ENCODE measurements at regions of chr7 and their contacts with region 1.

Region 1: DNA sequence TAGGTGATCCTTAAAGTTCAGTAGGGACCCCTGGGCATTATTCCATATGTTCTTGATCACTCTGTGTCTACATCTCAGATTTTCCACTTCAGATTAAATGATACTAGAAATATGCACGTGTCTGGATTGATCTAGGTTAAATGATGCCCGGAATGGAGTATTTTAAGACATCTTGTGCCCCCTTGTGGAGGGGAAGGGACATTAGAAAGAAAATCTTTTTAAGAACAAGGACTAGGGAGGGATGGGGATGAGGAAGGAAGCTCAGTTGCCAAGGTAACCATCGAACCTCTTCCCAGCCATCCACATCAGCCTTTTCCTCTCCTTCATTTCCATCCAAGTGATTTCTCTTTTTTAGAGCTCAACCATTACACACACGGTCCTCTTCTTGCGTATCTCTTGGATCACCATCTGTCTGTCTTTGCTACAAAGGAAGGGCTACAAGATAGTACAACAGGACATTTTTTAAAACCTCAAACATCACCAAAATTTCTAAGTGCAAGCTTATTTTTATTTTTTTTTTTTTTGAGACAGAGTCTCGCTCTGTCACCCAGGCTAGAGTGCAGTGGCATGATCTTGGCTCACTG is 40.5 kb downstream of the PRSS2 start:
- DNase-seq: peak in 10 of 35 experiments; percentile 30 to 85 (median 54)
- ATAC-seq: no peak
- H3K4me3 ChIP-seq: no peak overlapping the region
- H3K4me3 Mint-ChIP-seq: peak overlapping the region; percentile 54 to 93 (median 64)
- H3K27ac ChIP-seq: peak overlapping the region; percentile 97
- H3K27ac Mint-ChIP-seq: peak overlapping the region; percentile 100
- H3K4me1 ChIP-seq: peaks cover 72 to 76% of the 10 kb centered on the region in 2 experiments
- H3K4me1 Mint-ChIP-seq: peaks cover 81 to 94% (median 89%) of the 10 kb centered on the region in 3 donors
- H3K27me3 ChIP-seq: no peaks in the 10 kb centered on the region
- H3K27me3 Mint-ChIP-seq: no peaks in the 10 kb centered on the region

Region 2: DNA sequence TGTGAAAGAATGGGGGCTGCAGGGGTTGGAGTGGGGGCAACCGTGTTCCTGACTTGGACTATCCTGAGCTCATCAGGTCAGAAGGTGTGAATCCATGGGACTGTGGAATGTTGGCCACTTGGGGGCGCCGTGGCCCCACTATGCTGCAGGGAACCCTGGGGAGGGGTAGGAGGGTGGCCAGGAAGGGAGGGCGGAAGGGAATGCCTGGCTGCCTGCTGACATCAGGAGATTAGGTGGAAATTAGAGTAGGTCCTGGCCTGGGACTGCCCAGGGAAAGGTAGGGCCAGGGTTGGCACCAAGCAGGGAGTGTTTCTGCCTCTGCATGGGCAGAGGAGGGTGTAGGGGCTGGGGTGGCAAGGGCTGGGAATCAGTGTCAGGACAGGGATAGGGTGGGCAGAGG is 487.5 kb before region 1 on chr7:
- CTCF ChIA-PET with region 1: interaction called, 6 to 17 read pairs
- POLR2A ChIA-PET with region 1: interaction called in 1 of 2 experiments, 3 read pairs
- DNase-seq: peak in 22 of 35 experiments; percentile 13 to 65 (median 33)
- ATAC-seq: peak; percentile 40 to 55 (median 46)
- H3K4me3 ChIP-seq: no peak overlapping the region
- H3K4me3 Mint-ChIP-seq: peak overlapping the region in 1 of 3 donors; percentile 42
- H3K27ac ChIP-seq: no peak overlapping the region
- H3K27ac Mint-ChIP-seq: peak overlapping the region; percentile 77 to 80
- H3K4me1 ChIP-seq: peaks cover 3 to 22% of the 10 kb centered on the region in 2 experiments
- H3K4me1 Mint-ChIP-seq: peaks cover 22 to 43% (median 27%) of the 10 kb centered on the region in 3 donors
- H3K27me3 ChIP-seq: peaks cover 0 to 17% of the 10 kb centered on the region in 2 experiments
- H3K27me3 Mint-ChIP-seq: peaks cover 14% of the 10 kb centered on the region in 2 donors

Region 3: DNA sequence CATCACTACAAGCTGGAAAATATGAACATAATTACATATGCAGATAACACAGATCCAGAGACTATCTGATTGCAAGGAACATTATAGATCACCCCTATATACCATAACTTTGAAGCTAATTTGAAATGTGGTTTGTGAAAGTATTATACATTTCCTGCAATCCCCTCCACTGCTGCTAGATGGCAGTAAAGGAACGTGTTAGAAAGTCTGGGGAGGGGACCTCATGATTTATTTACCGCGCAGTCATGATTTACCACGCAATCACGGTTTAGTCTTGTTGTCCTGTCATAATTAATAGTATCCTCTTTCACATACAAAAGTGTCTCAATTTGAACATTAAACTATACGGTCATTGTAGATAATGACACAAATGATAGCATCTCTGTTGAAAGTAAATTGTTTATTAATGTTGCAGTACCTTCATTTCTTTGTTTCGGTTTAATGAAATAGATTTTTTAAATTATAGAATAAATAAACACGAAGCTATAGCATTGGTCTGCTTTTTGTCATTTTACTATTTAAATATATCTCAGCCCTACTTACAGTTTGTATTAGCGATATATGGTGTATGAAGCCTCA is 207.3 kb before region 1 on chr7:
- CTCF ChIA-PET with region 1: interaction called, 9 to 12 read pairs
- POLR2A ChIA-PET with region 1: interaction called in 1 of 2 experiments, 5 read pairs
- DNase-seq: peak in 29 of 35 experiments; percentile 8 to 75 (median 41)
- ATAC-seq: peak in 1 of 4 experiments; percentile 46
- H3K4me3 ChIP-seq: no peak overlapping the region
- H3K4me3 Mint-ChIP-seq: no peak overlapping the region
- H3K27ac ChIP-seq: no peak overlapping the region
- H3K27ac Mint-ChIP-seq: peak overlapping the region; percentile 41 to 61
- H3K4me1 ChIP-seq: no peaks in the 10 kb centered on the region
- H3K4me1 Mint-ChIP-seq: peaks cover 2 to 12% (median 9%) of the 10 kb centered on the region in 3 donors
- H3K27me3 ChIP-seq: no peaks in the 10 kb centered on the region
- H3K27me3 Mint-ChIP-seq: peaks cover 0 to 9% of the 10 kb centered on the region in 2 donors

Region 4: GRCh38 chr7:142669074-142669654 is 142.1 kb before region 1 on chr7:
- CTCF ChIA-PET with region 1: interaction called, 5 to 17 read pairs
- POLR2A ChIA-PET with region 1: no interaction called
- DNase-seq: peak in 2 of 35 experiments; percentile 6 to 51
- ATAC-seq: peak in 3 of 4 experiments; percentile 33 to 45 (median 35)
- H3K4me3 ChIP-seq: no peak overlapping the region
- H3K4me3 Mint-ChIP-seq: peak overlapping the region; percentile 31 to 49 (median 41)
- H3K27ac ChIP-seq: no peak overlapping the region
- H3K27ac Mint-ChIP-seq: peak overlapping the region; percentile 76 to 83
- H3K4me1 ChIP-seq: peaks cover 13 to 18% of the 10 kb centered on the region in 2 experiments
- H3K4me1 Mint-ChIP-seq: peaks cover 24 to 32% (median 25%) of the 10 kb centered on the region in 3 donors
- H3K27me3 ChIP-seq: no peaks in the 10 kb centered on the region
- H3K27me3 Mint-ChIP-seq: no peaks in the 10 kb centered on the region

Region 5: GRCh38 chr7:142754681-142755575 is 56.3 kb before region 1 on chr7:
- CTCF ChIA-PET with region 1: no interaction called
- POLR2A ChIA-PET with region 1: no interaction called
- DNase-seq: no peak
- ATAC-seq: no peak
- H3K4me3 ChIP-seq: no peak overlapping the region
- H3K4me3 Mint-ChIP-seq: no peak overlapping the region
- H3K27ac ChIP-seq: no peak overlapping the region
- H3K27ac Mint-ChIP-seq: no peak overlapping the region
- H3K4me1 ChIP-seq: no peaks in the 10 kb centered on the region
- H3K4me1 Mint-ChIP-seq: no peaks in the 10 kb centered on the region
- H3K27me3 ChIP-seq: no peaks in the 10 kb centered on the region
- H3K27me3 Mint-ChIP-seq: peaks cover 0 to 1% of the 10 kb centered on the region in 2 donors

Region 6: DNA sequence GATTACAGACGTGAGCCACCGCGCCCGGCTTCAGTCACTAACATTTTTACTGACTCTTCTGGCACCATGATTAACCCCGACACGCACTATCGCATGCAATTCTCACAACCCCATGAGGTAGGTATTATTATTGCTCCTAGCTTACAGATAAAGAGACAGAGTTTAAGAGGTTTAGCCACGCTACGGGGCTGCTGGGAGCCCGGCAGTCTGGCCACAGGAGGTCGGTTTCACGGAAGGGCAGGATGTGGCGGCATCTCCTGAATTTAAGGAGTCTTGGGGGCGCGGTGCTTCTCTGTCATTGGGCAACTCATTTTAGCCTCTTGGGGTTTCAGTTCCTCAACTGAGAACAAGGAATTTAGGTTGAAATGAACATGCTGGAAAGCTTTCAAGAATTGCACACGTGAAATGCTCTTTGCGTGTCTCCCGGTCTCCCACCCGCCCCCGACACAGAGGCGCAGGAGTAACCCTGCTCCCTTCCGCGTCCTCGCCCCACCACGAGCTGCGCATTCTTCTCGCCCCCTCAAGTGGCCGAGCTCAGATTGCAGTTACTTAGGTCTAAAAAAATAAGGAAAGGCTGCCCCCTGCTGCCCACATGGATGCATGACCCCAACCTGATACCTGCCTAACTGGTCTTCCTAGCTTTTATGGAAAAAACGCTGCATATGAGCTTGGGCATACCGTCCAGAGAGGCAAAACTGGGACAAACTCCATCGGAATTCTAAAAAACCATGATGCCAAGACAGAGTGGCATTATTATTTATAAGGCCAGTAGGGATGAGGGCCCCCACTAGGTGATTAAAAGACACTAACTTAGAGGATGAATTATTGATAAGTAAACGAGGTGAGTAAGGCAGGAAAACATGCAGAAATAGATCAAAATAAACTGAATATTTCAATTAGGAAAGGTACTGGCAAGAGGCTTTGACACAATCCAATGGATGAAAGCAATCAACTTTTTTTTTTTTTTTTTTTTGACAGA is 28.0 kb before region 1 on chr7:
- CTCF ChIA-PET with region 1: interaction called, 13 to 382 read pairs
- POLR2A ChIA-PET with region 1: interaction called, 187 to 577 read pairs
- DNase-seq: peak; percentile 58 to 90 (median 77)
- ATAC-seq: peak; percentile 32 to 59 (median 50)
- H3K4me3 ChIP-seq: peak overlapping the region in 1 of 2 donors; percentile 48
- H3K4me3 Mint-ChIP-seq: peak overlapping the region; percentile 74 to 82 (median 75)
- H3K27ac ChIP-seq: peak overlapping the region; percentile 97
- H3K27ac Mint-ChIP-seq: peak overlapping the region; percentile 90
- H3K4me1 ChIP-seq: peaks cover 3 to 15% of the 10 kb centered on the region in 2 experiments
- H3K4me1 Mint-ChIP-seq: peaks cover 7 to 15% (median 9%) of the 10 kb centered on the region in 3 donors
- H3K27me3 ChIP-seq: no peaks in the 10 kb centered on the region
- H3K27me3 Mint-ChIP-seq: no peaks in the 10 kb centered on the region